ENCODE measurements at regions of chr7 and their contacts with region 1.

Region 1: GRCh38 chr7:50793115-50793946 is 10.6 kb upstream of the GRB10 start:
- DNase-seq: peak; percentile 16 to 49 (median 31)
- H3K4me3 ChIP-seq: no peak overlapping the region
- H3K4me3 Mint-ChIP-seq: peak overlapping the region; percentile 59 to 89 (median 82)
- H3K27ac ChIP-seq: no peak overlapping the region
- H3K27ac Mint-ChIP-seq: peak overlapping the region in 1 of 7 donors; percentile 54
- H3K4me1 ChIP-seq: peaks cover 8% of the 10 kb centered on the region
- H3K4me1 Mint-ChIP-seq: peaks cover 6 to 23% (median 14%) of the 10 kb centered on the region in 4 donors
- H3K27me3 ChIP-seq: peaks cover 8% of the 10 kb centered on the region
- H3K27me3 Mint-ChIP-seq: peaks cover 16 to 25% of the 10 kb centered on the region in 2 donors

Region 2: DNA sequence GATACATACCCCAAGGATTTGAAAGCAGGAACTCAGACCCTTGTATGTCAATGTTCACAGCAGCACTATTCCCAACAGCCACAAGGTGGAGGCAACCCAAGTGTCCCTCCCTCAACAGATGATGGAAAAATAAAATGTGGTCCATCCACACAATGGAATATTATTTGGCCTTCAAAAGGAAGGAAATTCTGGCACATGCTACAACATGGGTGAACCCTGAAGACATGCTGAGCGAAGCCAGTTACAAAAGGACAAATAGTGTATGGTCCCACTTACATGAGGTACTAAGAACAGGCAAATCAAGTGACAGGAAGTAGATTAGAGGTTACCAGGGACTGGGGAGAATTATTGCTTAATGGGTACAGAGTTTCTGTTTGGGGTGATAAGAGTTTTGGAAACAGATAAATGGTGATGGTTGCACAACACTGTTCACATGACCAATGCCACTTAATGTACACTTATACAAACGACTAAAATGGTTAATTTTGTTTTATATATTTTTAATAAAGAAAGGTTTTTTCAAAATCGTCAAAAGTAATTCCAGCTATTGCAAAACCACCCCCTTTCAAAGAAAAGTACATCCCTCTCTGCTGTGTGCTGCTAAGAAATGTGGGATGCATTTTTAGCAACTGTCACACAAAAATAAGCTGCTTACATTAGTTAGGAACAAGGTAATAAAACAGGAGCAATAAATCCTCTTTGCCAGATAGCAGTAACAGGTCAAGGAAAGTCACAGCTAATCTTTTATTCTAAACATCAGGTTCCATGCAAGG is 96.3 kb before region 1 on chr7:
- CTCF ChIA-PET with region 1: interaction called, 4 read pairs
- POLR2A ChIA-PET with region 1: no interaction called
- intact Hi-C with region 1: loop called (anchors 2 kb)
- DNase-seq: peak in 4 of 5 donors; percentile 15 to 24 (median 20)
- H3K4me3 ChIP-seq: no peak overlapping the region
- H3K4me3 Mint-ChIP-seq: no peak overlapping the region
- H3K27ac ChIP-seq: no peak overlapping the region
- H3K27ac Mint-ChIP-seq: peak overlapping the region in 1 of 7 donors; percentile 14
- H3K4me1 ChIP-seq: no peaks in the 10 kb centered on the region
- H3K4me1 Mint-ChIP-seq: peaks cover 3 to 4% (median 4%) of the 10 kb centered on the region in 4 donors
- H3K27me3 ChIP-seq: no peaks in the 10 kb centered on the region
- H3K27me3 Mint-ChIP-seq: peaks cover 0 to 2% of the 10 kb centered on the region in 2 donors

Region 3: GRCh38 chr7:50739744-50740435 is 53.4 kb before region 1 on chr7:
- CTCF ChIA-PET with region 1: interaction called, 3 read pairs
- POLR2A ChIA-PET with region 1: interaction called, 4 read pairs
- intact Hi-C with region 1: loop called (anchors 1 kb)
- DNase-seq: peak; percentile 85 to 93 (median 91)
- H3K4me3 ChIP-seq: peak overlapping the region in 1 of 2 donors; percentile 8
- H3K4me3 Mint-ChIP-seq: peak overlapping the region; percentile 65 to 83 (median 78)
- H3K27ac ChIP-seq: peak overlapping the region; percentile 67
- H3K27ac Mint-ChIP-seq: peak overlapping the region; percentile 88 to 99 (median 98)
- H3K4me1 ChIP-seq: peaks cover 21% of the 10 kb centered on the region
- H3K4me1 Mint-ChIP-seq: peaks cover 23 to 34% (median 28%) of the 10 kb centered on the region in 4 donors
- H3K27me3 ChIP-seq: no peaks in the 10 kb centered on the region
- H3K27me3 Mint-ChIP-seq: no peaks in the 10 kb centered on the region

Region 4: DNA sequence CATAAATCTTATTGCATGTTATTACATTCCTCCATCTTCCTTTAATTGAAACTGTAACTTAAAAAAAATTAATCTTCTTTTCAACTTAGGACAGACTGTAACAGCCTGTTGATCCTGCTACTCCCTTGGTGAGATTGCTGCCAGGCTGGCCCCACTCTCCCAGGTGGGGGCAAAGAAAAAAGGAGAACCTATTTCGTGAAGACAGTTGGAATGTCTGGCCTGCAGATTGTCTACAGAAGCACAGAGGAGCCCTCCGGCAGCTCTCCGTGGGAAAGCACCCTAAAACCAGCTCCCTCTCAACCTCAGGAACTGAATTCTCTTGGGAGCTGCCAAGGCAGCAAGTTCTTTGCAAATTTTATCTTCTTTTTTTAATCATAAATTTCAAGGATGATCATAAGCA is 43.4 kb before region 1 on chr7:
- CTCF ChIA-PET with region 1: no interaction called
- POLR2A ChIA-PET with region 1: no interaction called
- intact Hi-C with region 1: no loop called
- DNase-seq: no peak
- H3K4me3 ChIP-seq: no peak overlapping the region
- H3K4me3 Mint-ChIP-seq: no peak overlapping the region
- H3K27ac ChIP-seq: no peak overlapping the region
- H3K27ac Mint-ChIP-seq: no peak overlapping the region
- H3K4me1 ChIP-seq: no peaks in the 10 kb centered on the region
- H3K4me1 Mint-ChIP-seq: peaks cover 6 to 12% (median 9%) of the 10 kb centered on the region in 4 donors
- H3K27me3 ChIP-seq: no peaks in the 10 kb centered on the region
- H3K27me3 Mint-ChIP-seq: no peaks in the 10 kb centered on the region